HepG2 (cell line): ENCODE measurements at regions of chr11 and their contacts with region 1.

Region 1: GRCh38 chr11:35617687-35618496 is at the start of gene FJX1:
- DNase-seq: peak; percentile 17
- ATAC-seq: peak; percentile 63
- H3K4me3 ChIP-seq: peak within 1 kb of the TSS; percentile 55 to 68 (median 60); a peak in 5 of 6 replicates
- H3K27ac ChIP-seq: no peak within 1 kb of the TSS
- H3K4me1 ChIP-seq: peaks cover 7% of the 10 kb centered on the region; the same call in 1 of the 2 replicates
- H3K27me3 ChIP-seq: peaks cover 1 to 31% of the 10 kb centered on the region in 2 experiments; a peak in 4 of 5 replicates
- CTCF ChIP-seq: 0 out of 2 replicates have a peak, but pooled peaks have one; percentile 7
- EP300 ChIP-seq: no peak
- POLR2A ChIP-seq: no peak
- RAD21 ChIP-seq: no peak
- total RNA-seq, gene FJX1: 0.44 and 0.82 TPM in 2 replicates

Region 2: DNA sequence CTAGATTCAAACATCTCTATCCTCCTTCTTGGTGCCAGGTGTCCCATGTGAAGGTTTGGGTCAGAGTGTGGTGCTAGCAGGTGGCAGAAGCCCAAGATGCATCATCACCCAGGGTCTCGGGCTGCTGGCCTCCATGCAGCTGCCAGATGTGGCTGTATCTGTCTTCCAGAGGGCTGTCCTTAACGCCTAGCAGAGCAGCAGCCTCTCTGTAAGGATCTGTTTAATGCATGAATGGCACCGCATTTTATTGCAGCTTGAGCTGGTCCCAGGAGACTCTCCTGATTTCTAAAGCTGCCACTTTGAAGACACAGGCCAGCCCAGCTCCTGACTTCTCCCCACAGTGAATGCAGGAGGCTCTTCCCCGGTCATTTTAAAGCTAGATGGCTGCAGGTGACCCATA is 224.8 kb before region 1 on chr11:
- CTCF ChIA-PET with region 1: no interaction called
- POLR2A ChIA-PET with region 1: no interaction called
- in situ Hi-C with region 1: no loop called
- intact Hi-C with region 1: no loop called
- DNase-seq: no peak
- ATAC-seq: no peak
- H3K4me3 ChIP-seq: no peak overlapping the region
- H3K27ac ChIP-seq: no peak overlapping the region
- H3K4me1 ChIP-seq: peaks cover 30% of the 10 kb centered on the region
- H3K27me3 ChIP-seq: 0 out of 5 replicates have a peak, but pooled peaks cover 2 to 6% of the 10 kb centered on the region in 2 experiments
- CTCF ChIP-seq: no peak
- EP300 ChIP-seq: no peak
- POLR2A ChIP-seq: no peak
- RAD21 ChIP-seq: no peak

Region 3: GRCh38 chr11:35641171-35641897 is 23.4 kb after region 1 on chr11:
- CTCF ChIA-PET with region 1: no interaction called
- POLR2A ChIA-PET with region 1: no interaction called
- in situ Hi-C with region 1: no loop called
- intact Hi-C with region 1: no loop called
- DNase-seq: no peak
- ATAC-seq: no peak
- H3K4me3 ChIP-seq: no peak overlapping the region
- H3K27ac ChIP-seq: no peak overlapping the region
- H3K4me1 ChIP-seq: no peaks in the 10 kb centered on the region
- H3K27me3 ChIP-seq: peaks cover 3 to 33% of the 10 kb centered on the region in 2 experiments; a peak in 3 of 5 replicates
- CTCF ChIP-seq: no peak
- EP300 ChIP-seq: no peak
- POLR2A ChIP-seq: no peak
- RAD21 ChIP-seq: no peak

Region 4: DNA sequence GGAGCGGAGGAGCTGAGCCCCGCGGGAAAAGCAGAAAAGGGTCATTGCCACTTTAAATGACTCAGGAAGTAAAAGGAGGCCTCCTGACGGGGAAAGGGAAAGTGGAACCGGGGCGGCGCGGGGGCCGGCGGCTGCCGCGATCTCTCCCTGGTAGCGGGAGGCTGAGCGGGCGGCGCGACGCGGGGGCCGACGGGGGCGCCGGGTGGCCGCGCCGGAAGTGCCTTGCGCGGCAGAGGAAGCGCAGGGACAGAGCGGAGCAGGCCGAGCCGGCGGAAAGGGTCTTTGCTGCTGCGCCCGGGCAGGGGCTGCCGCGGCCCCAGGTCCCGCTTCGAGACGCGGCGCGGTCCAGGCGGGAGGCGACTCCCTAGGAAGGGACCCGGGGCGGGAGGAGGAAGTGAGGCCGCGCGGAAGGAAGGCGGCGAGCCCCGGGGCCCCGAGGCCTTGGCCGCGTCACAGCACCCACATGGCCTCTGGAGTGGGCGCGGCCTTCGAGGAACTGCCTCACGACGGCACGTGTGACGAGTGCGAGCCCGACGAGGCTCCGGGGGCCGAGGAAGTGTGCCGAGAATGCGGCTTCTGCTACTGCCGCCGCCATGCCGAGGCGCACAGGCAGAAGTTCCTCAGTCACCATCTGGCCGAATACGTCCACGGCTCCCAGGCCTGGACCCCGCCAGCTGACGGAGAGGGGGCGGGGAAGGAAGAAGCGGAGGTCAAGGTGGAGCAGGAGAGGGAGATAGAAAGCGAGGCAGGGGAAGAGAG is 44.9 kb after region 1 on chr11 and contains the start of gene TRIM44:
- CTCF ChIA-PET with region 1: no interaction called
- POLR2A ChIA-PET with region 1: no interaction called
- in situ Hi-C with region 1: no loop called
- intact Hi-C with region 1: loop called (anchors 1 kb)
- DNase-seq: peak; percentile 59
- ATAC-seq: peak; percentile 89
- H3K4me3 ChIP-seq: peak within 1 kb of the TSS; percentile 54 to 73 (median 64)
- H3K27ac ChIP-seq: peak within 1 kb of the TSS; percentile 89
- H3K4me1 ChIP-seq: peaks cover 48% of the 10 kb centered on the region
- H3K27me3 ChIP-seq: peaks cover 0 to 16% of the 10 kb centered on the region in 2 experiments; a peak in 3 of 5 replicates
- CTCF ChIP-seq: no peak
- EP300 ChIP-seq: no peak
- POLR2A ChIP-seq: peak in 1 of 2 experiments; percentile 60; a peak in 3 of 4 replicates
- RAD21 ChIP-seq: no peak
- total RNA-seq, gene TRIM44: 22.7 and 25.6 TPM in 2 replicates

Region 5: DNA sequence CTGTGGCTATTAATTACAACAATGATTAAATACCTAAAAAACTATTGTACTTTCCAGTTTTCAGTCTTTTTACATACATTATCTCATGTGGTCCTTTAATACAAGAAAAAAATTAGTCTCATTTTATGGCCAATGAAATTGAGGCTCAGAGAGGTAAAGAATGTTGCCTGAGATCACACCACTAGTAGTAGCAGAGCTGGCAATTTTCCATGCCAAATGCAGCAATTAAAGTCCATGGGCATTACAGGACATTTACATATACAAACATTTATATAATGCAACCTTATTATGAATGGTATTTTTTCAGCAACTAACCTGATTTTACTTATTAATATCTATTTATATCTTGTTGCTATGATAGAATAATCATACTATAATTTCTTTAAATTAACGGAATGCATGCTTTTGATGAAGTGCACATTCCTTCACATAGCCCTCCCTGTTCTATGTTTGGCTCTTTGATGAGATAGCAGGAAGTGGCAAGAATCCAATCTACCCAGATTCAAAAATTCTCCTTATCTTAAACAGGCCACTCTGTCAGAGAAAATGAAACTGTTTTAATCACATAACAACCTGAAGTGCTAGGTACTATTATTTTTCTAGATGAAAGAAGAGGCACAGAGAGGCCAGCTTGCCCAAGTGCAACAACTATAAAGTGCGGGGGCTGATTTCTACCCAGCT is 205.1 kb after region 1 on chr11:
- CTCF ChIA-PET with region 1: interaction called, 11 read pairs
- POLR2A ChIA-PET with region 1: interaction called, 3 read pairs
- in situ Hi-C with region 1: loop called (anchors 5 kb)
- intact Hi-C with region 1: loop called (anchors 1 kb)
- DNase-seq: no peak
- ATAC-seq: no peak
- H3K4me3 ChIP-seq: no peak overlapping the region
- H3K27ac ChIP-seq: no peak overlapping the region
- H3K4me1 ChIP-seq: peaks cover 21% of the 10 kb centered on the region
- H3K27me3 ChIP-seq: no peaks in the 10 kb centered on the region
- CTCF ChIP-seq: no peak
- EP300 ChIP-seq: no peak
- POLR2A ChIP-seq: no peak
- RAD21 ChIP-seq: no peak

Region 6: DNA sequence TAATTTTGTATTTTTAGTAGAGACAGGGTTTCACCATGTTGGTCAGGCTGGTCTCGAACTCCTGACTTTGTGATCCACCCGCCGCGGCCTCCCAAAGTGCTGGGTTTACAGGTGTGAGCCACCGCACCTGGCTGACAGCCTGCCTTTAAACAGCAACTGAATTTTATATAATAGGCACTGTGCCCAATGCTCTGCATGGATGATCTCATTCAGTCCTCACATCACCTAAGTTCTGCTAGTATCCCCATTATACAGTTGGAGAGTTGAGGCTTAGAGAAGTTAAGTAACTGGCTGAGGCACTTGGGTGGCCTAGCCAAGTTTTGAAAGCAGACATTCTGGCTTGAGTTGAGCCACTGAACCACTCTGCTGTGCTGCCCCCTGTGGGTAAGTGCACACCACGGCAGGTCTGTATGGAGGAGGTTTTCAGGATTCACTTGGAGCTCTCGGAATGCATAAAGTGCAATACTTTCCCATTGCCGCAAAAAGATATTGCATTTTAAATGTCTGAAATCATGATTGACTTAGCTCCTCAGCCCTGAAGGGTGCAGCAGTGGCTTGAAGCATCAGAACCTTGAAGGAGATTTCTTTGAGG is 438.4 kb after region 1 on chr11:
- CTCF ChIA-PET with region 1: no interaction called
- POLR2A ChIA-PET with region 1: no interaction called
- in situ Hi-C with region 1: no loop called
- intact Hi-C with region 1: loop called (anchors 1 kb)
- DNase-seq: no peak
- ATAC-seq: peak; percentile 65
- H3K4me3 ChIP-seq: no peak overlapping the region
- H3K27ac ChIP-seq: no peak overlapping the region
- H3K4me1 ChIP-seq: no peaks in the 10 kb centered on the region
- H3K27me3 ChIP-seq: no peaks in the 10 kb centered on the region; a peak in 1 of 5 replicates
- CTCF ChIP-seq: peak; percentile 61
- EP300 ChIP-seq: no peak
- POLR2A ChIP-seq: no peak
- RAD21 ChIP-seq: no peak

Region 7: GRCh38 chr11:36131721-36132397 is 514.0 kb after region 1 on chr11:
- CTCF ChIA-PET with region 1: interaction called, 23 read pairs
- POLR2A ChIA-PET with region 1: no interaction called
- in situ Hi-C with region 1: loop called (anchors 5 kb)
- intact Hi-C with region 1: no loop called
- DNase-seq: peak; percentile 20
- ATAC-seq: peak; percentile 82
- H3K4me3 ChIP-seq: no peak overlapping the region
- H3K27ac ChIP-seq: no peak overlapping the region
- H3K4me1 ChIP-seq: no peaks in the 10 kb centered on the region
- H3K27me3 ChIP-seq: peaks cover 6 to 14% of the 10 kb centered on the region in 2 experiments; a peak in 3 of 5 replicates
- CTCF ChIP-seq: peak; percentile 81
- EP300 ChIP-seq: no peak
- POLR2A ChIP-seq: no peak
- RAD21 ChIP-seq: no peak

Region 8: GRCh38 chr11:36258730-36259360 is 641.0 kb after region 1 on chr11:
- CTCF ChIA-PET with region 1: interaction called, 4 read pairs
- POLR2A ChIA-PET with region 1: no interaction called
- in situ Hi-C with region 1: no loop called
- intact Hi-C with region 1: loop called (anchors 1 kb)
- DNase-seq: peak; percentile 29
- ATAC-seq: peak; percentile 94
- H3K4me3 ChIP-seq: no peak overlapping the region
- H3K27ac ChIP-seq: no peak overlapping the region
- H3K4me1 ChIP-seq: no peaks in the 10 kb centered on the region
- H3K27me3 ChIP-seq: peaks cover 3 to 28% of the 10 kb centered on the region in 2 experiments; a peak in 4 of 5 replicates
- CTCF ChIP-seq: peak; percentile 75
- EP300 ChIP-seq: no peak
- POLR2A ChIP-seq: no peak
- RAD21 ChIP-seq: peak; percentile 27; the same call in 1 of the 2 replicates

Region 9: DNA sequence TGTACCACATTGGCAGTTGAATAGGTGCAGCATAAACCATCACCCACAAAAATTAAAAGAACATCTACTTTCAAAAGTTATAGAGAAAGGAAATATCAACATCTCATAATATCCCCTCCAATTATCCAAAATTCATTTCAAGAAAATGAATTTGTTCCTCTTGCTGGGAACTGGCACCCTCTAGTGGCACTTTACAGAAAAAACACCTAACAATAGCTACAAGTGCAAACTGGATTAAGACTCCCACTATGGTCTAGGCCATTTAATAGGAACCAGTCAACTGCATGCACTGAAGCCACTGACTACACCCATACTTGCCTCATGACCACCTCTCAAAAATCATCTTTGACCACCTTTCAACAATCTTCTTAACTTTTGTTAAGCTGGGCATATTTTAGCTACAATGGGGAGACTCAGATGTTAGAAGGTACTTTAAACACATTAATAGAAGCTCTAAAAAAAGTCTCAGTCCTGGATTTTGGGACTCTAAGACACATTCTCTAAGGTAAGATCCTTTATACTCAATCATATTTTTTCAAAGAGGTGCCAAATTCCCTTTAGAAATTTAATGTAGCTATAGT is 874.9 kb after region 1 on chr11:
- CTCF ChIA-PET with region 1: no interaction called
- POLR2A ChIA-PET with region 1: no interaction called
- in situ Hi-C with region 1: loop called (anchors 25 kb)
- intact Hi-C with region 1: no loop called
- DNase-seq: peak; percentile 35
- ATAC-seq: peak; percentile 66; the same call in 2 of the 3 replicates
- H3K4me3 ChIP-seq: no peak overlapping the region
- H3K27ac ChIP-seq: no peak overlapping the region
- H3K4me1 ChIP-seq: no peaks in the 10 kb centered on the region
- H3K27me3 ChIP-seq: no peaks in the 10 kb centered on the region
- CTCF ChIP-seq: peak; percentile 71
- EP300 ChIP-seq: no peak
- POLR2A ChIP-seq: no peak
- RAD21 ChIP-seq: no peak